ENCODE measurements at regions of chr9 and their contacts with region 1.

Region 1: GRCh38 chr9:97598461-97599288 is 34.5 kb downstream of the TSTD2 start:
- DNase-seq: peak; percentile 56
- H3K4me3 ChIP-seq: no peak overlapping the region
- H3K27ac ChIP-seq: no peak overlapping the region
- H3K4me1 ChIP-seq: no peaks in the 10 kb centered on the region
- H3K27me3 ChIP-seq: no peaks in the 10 kb centered on the region
- CTCF ChIP-seq: peak; percentile 90 to 92

Region 2: DNA sequence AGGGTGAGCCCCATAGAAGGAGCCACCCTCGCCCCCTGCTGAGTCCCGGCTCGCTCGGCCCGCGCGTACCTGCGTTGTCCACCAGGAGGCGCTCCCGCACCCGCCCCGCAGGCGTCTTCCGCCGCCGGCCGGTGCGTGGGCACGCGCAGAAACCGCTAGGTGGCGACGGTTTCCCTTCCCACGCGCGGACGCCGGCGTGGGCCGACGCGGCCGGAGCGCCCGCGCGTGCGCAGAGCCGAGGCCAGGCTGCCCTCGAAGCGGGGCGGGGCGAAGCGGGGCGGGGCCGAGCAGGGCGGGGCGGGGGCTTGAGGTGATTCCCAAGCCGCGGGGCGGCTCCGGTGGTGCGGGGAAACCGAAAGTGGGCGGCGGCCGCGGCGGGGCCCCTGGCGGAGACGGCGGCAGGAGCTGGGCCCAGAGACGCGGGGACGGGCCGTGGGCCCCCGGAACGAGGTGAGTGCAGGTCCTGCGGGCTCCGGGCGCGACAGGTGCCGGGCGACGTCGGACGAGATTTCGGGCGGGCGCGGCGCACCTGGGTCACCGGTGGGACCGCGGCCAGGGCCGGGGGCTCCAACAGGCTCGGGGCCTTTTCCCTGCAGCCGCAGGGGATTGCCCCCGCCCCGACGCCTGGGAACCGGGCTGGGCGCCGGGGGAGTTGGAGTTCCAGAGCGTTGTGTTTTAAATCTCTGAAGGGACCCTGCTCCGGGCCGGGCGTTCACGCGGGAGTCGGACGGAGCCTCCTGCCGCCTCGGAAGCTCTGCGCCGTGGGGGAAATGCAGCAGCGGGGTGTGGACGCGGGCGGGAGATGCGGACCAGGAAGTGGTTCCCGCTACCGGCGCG is 186.7 kb before region 1 on chr9 and contains the start of gene TDRD7:
- CTCF ChIA-PET with region 1: interaction called, 4 read pairs
- dilution Hi-C with region 1: no loop called
- in situ Hi-C with region 1: no loop called
- intact Hi-C with region 1: loop called (anchors 1 kb)
- DNase-seq: peak; percentile 63
- H3K4me3 ChIP-seq: peak within 1 kb of the TSS; percentile 75 to 80 (median 77)
- H3K27ac ChIP-seq: peak within 1 kb of the TSS; percentile 39
- H3K4me1 ChIP-seq: peaks cover 10% of the 10 kb centered on the region
- H3K27me3 ChIP-seq: no peaks in the 10 kb centered on the region
- CTCF ChIP-seq: peak; percentile 89 to 95
- total RNA-seq, gene TDRD7: 8.5 to 8.9 TPM

Region 3: DNA sequence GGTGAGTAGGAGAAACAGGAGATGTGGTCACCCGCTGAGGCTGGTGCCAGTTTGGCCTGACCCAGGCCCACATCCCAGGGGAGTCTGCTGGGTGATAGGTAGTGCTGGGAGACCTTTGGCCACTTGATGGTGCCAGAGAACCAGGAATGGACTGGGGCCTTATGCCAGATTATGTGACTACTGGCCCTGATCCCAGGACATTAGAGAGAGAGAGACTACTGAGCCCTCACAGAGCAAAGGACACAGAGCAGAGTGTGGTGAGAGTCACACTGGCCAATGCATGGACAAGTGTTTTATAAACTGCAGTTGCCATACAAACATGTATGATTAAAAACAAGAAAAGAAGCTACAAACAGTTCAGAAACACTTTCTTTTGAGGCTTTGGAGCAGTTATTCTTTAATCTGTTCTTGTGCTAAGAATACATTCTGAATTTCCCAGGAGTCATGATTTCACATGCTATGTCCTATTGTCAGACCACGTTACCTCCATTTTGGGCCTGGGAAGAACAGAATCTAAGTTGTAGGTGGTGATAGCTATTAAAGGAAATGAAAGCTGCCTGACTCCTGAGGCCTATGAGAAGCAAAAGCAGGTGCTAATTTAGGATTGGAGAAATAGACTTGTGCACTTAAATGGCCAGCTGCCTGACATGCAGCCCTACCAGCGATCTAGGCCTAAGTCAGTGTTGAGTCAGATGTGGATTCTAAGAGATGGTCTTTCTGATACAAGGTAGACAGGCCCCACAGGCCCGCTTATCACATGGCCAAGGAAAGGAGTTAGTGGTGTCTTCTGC is 129.8 kb before region 1 on chr9:
- CTCF ChIA-PET with region 1: interaction called, 11 read pairs
- dilution Hi-C with region 1: no loop called
- in situ Hi-C with region 1: loop called in 1 of 2 experiments (anchors 5 kb)
- intact Hi-C with region 1: loop called (anchors 1 kb)
- DNase-seq: peak; percentile 13
- H3K4me3 ChIP-seq: no peak overlapping the region
- H3K27ac ChIP-seq: no peak overlapping the region
- H3K4me1 ChIP-seq: no peaks in the 10 kb centered on the region
- H3K27me3 ChIP-seq: no peaks in the 10 kb centered on the region
- CTCF ChIP-seq: peak; percentile 62 to 85

Region 4: DNA sequence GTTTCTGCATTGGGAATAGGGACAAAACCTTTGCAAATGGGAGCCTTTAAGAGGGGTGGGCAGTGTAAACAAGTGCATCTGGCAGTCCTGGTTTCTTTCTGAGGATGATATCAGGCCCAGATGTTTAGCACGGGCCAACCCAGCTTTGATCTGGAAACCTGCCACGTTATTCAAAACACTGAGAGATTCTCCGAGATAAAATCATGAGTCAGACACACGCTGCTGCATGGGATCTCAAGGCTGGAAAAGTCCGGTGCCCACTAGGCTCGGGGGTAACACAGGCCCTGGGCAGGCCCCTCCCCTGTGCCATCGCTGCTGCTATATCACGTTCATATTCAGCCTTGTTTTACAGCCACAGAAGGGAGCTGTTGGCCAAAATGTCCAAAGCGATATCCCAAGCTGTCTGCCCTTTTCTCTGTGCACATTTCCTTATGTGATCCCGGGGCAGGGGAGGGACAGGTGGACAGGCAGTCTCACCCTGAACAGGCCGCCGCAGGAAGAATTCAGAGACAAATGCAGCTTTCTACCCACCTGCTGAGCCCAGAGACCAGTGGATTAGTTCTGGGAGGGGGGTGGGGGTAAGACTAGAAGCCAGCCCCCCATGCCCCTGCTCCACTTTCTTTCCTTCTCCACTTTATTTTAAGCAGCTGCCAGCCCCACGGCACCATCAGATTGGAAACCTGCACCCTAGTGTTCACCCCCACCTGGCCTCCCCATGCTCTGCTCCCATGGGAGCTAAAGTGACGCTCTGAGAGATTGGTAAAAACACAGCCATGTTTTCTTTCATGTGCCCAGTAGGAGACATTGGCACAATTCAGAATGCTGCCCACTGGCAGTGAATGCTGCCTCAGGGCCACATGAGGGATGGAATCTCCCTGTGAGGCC is 34.1 kb before region 1 on chr9:
- CTCF ChIA-PET with region 1: no interaction called
- dilution Hi-C with region 1: no loop called
- in situ Hi-C with region 1: no loop called
- intact Hi-C with region 1: no loop called
- DNase-seq: peak; percentile 42
- H3K4me3 ChIP-seq: no peak overlapping the region
- H3K27ac ChIP-seq: no peak overlapping the region
- H3K4me1 ChIP-seq: no peaks in the 10 kb centered on the region
- H3K27me3 ChIP-seq: no peaks in the 10 kb centered on the region
- CTCF ChIP-seq: no peak

Region 5: GRCh38 chr9:97638666-97639065 is 40.0 kb after region 1 on chr9:
- CTCF ChIA-PET with region 1: no interaction called
- dilution Hi-C with region 1: no loop called
- in situ Hi-C with region 1: no loop called
- intact Hi-C with region 1: no loop called
- DNase-seq: no peak
- H3K4me3 ChIP-seq: no peak overlapping the region
- H3K27ac ChIP-seq: no peak overlapping the region
- H3K4me1 ChIP-seq: peaks cover 12% of the 10 kb centered on the region
- H3K27me3 ChIP-seq: no peaks in the 10 kb centered on the region
- CTCF ChIP-seq: peak; percentile 14 to 32

Measured in mammary epithelial cell (primary cell).